CD14-positive monocyte (primary cell): ENCODE measurements at regions of chr15 and their contacts with region 1.

Region 1: GRCh38 chr15:82966671-82967071 is 14.2 kb upstream of the HOMER2 start:
- DNase-seq: no peak
- H3K4me3 ChIP-seq: no peak overlapping the region
- H3K4me3 Mint-ChIP-seq: no peak overlapping the region
- H3K27ac ChIP-seq: no peak overlapping the region
- H3K27ac Mint-ChIP-seq: no peak overlapping the region
- H3K4me1 ChIP-seq: peaks cover 5 to 7% of the 10 kb centered on the region in 2 donors
- H3K4me1 Mint-ChIP-seq: peaks cover 21% of the 10 kb centered on the region
- H3K27me3 ChIP-seq: no peaks in the 10 kb centered on the region
- H3K27me3 Mint-ChIP-seq: peaks cover 2 to 3% (median 2%) of the 10 kb centered on the region in 3 donors
- CTCF ChIP-seq: no peak

Region 2: DNA sequence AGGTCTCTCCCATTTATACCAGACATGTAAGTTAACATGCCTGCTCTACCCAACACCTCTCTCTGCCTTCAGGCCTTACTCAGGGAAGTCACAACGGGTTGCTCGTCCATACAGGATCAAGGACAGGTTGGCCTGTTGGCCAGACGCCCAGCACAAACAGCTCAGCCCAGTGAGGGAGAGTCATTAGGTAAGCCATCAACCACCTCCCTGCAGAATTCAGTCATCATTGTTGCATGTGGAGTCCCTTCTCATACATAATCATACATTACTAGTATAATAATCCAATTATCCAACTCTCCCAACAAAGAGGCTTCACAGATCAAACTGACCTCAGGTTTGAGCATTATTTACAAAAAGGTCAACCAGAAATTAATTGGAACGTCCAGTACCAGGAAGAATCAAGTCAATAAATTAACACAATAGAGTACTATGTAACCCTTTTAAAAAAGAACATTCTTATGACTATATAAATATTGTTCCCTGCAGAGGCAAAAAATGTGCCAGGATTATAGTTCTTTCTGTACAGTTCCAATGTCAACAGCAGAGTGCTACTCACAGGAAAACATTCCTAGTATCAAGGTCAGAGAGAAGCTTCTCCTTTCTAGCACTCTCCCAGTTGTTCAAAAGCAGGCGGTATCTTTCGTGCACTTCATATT is 47.3 kb before region 1 on chr15:
- intact Hi-C with region 1: loop called in 1 of 2 experiments (anchors 10 kb)
- DNase-seq: no peak
- H3K4me3 ChIP-seq: no peak overlapping the region
- H3K4me3 Mint-ChIP-seq: no peak overlapping the region
- H3K27ac ChIP-seq: no peak overlapping the region
- H3K27ac Mint-ChIP-seq: no peak overlapping the region
- H3K4me1 ChIP-seq: no peaks in the 10 kb centered on the region
- H3K4me1 Mint-ChIP-seq: no peaks in the 10 kb centered on the region
- H3K27me3 ChIP-seq: no peaks in the 10 kb centered on the region
- H3K27me3 Mint-ChIP-seq: peaks cover 0 to 4% (median 0%) of the 10 kb centered on the region in 3 donors
- CTCF ChIP-seq: no peak